ENCODE measurements at regions of chr11 and their contacts with region 1.

Region 1: GRCh38 chr11:64269380-64270234 is 14.9 kb downstream of the BAD start:
- DNase-seq: peak; percentile 95 to 98
- H3K4me3 ChIP-seq: peak overlapping the region; percentile 70 to 84 (median 82)
- H3K27ac ChIP-seq: peak overlapping the region; percentile 88
- H3K4me1 ChIP-seq: peaks cover 0 to 11% (median 5%) of the 10 kb centered on the region in 4 experiments; a peak in 5 of 7 replicates
- H3K27me3 ChIP-seq: no peaks in the 10 kb centered on the region
- CTCF ChIP-seq: no peak; a peak in 2 of 4 replicates
- EP300 ChIP-seq: 0 out of 3 replicates have a peak, but pooled peaks of 1 of the 2 experiments have one; percentile 27
- POLR2A ChIP-seq: no peak; a peak in 1 of 3 replicates
- RAD21 ChIP-seq: peak in 1 of 2 experiments; percentile 8; a peak in 1 of 4 replicates

Region 2: GRCh38 chr11:64007629-64008282 is 261.9 kb before region 1 on chr11:
- CTCF ChIA-PET with region 1: no interaction called
- POLR2A ChIA-PET with region 1: no interaction called
- DNase-seq: peak in 1 of 2 experiments; percentile 73
- H3K4me3 ChIP-seq: peak overlapping the region; percentile 21 to 57 (median 34); a peak in 7 of 8 replicates
- H3K27ac ChIP-seq: no peak overlapping the region
- H3K4me1 ChIP-seq: peaks cover 0 to 15% (median 10%) of the 10 kb centered on the region in 4 experiments; a peak in 5 of 7 replicates
- H3K27me3 ChIP-seq: peaks cover 28 to 89% (median 72%) of the 10 kb centered on the region in 4 experiments
- CTCF ChIP-seq: peak in 1 of 3 experiments; percentile 24; a peak in 1 of 4 replicates
- EP300 ChIP-seq: no peak
- POLR2A ChIP-seq: no peak
- RAD21 ChIP-seq: peak in 1 of 2 experiments; percentile 16; a peak in 1 of 4 replicates

Region 3: DNA sequence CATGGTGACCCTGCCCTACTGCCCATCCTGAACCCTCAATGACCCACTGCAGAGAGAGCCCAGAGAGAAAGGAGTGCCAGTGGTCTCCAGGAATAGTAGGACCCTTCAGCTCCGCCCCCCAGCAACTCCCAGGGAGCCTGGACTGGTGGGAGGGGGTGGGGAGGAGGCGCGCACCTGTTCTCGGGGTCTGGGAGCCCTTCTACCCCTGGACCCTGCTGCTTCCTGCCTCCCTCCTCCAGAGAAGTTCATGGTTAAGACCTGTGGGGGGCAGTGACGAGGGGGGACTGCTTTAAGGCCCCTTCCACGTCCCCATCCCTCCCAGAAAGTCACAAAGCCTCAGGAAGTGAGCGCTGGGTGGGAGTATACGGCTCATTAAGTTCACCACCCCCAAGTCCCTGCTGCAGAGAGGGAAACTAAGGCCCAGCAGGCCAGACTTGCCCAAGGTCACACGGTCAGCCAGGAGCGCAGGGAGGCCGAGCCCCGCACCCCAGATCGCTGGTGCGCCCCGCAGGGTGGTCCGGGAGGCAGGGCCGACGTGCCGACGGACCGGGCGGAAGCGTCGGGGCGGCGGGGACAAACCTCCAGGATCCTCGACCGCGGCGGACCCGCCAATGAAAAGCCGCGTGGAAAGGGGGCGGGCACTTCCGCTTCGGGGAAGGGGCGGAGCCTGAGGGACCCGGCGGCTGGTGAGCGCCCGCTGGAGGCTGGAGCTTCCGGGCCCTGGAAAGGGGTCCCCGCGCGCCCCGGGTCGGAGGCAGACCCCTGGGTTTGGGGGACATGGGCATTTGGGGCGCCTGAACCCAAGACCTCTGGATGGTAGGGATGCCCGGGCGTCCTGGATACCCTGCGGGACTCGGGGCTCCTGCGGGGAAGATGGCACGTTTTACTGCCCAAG is 43.7 kb before region 1 on chr11 and contains the starts of genes NUDT22 and TRPT1:
- CTCF ChIA-PET with region 1: interaction called, 5 read pairs
- POLR2A ChIA-PET with region 1: interaction called, 24 read pairs
- DNase-seq: peak in 1 of 2 experiments; percentile 97
- H3K4me3 ChIP-seq: peak within 1 kb of the TSS; percentile 63 to 90 (median 84)
- H3K27ac ChIP-seq: peak within 1 kb of the TSS; percentile 11; the same call in 1 of the 2 replicates
- H3K4me1 ChIP-seq: peaks cover 0 to 23% (median 14%) of the 10 kb centered on the region in 4 experiments; a peak in 6 of 7 replicates
- H3K27me3 ChIP-seq: no peaks in the 10 kb centered on the region
- CTCF ChIP-seq: peak in 1 of 3 experiments; percentile 48; a peak in 1 of 4 replicates
- EP300 ChIP-seq: no peak
- POLR2A ChIP-seq: peak in 1 of 2 experiments; percentile 44; a peak in 2 of 3 replicates
- RAD21 ChIP-seq: no peak; a peak in 2 of 4 replicates
- total RNA-seq, gene NUDT22: 43.4 and 51.5 TPM in 2 replicates
- total RNA-seq, gene TRPT1: 34.5 and 39.7 TPM in 2 replicates

Region 4: DNA sequence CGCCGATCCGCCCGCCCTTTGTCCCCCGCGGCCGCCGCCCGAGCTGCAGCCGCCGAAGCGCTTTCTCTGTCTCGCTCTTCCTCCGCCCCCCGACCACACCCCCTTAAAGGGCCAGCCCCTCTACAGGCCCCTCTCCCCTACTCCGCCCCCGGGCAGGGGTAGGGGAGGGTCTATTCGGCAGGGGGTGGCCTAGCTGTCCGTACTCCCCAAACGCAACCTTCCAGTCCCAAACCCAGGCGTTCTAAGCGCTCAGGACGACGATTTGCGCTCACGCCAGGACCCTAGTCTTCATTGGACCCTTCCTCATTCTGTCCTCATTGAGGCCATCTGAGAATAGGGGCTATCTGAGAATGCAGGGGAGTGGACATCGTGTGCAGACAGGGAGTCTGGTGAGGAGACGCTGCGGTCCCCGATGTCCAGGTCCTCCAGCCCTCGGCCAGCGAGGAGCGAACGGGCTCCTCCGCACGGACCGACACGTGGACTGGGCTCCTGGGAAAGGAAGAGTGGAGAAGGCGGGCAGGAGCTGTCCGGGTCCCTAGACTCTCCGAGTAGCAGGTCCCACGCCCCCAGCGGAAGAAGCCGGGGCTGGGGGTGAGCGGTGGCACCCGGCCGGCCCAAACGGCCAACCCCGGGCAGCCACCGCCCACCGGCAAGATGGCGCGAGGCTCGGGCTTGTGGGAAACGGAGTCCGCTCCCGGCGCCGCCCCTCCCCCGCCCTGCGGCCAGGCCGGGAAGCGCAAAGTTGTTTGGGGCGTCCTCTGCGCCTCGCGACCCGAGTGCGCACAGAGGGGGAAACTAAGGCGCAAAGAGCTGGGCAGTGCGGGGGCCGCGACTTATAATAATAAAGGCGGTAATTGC is 22.5 kb before region 1 on chr11 and contains the start of gene PPP1R14B:
- CTCF ChIA-PET with region 1: interaction called, 102 read pairs
- POLR2A ChIA-PET with region 1: interaction called, 352 read pairs
- DNase-seq: peak in 1 of 2 experiments; percentile 94
- H3K4me3 ChIP-seq: peak within 1 kb of the TSS; percentile 56 to 99 (median 90)
- H3K27ac ChIP-seq: peak within 1 kb of the TSS; percentile 61
- H3K4me1 ChIP-seq: peaks cover 0 to 48% (median 35%) of the 10 kb centered on the region in 4 experiments; a peak in 6 of 7 replicates
- H3K27me3 ChIP-seq: no peaks in the 10 kb centered on the region
- CTCF ChIP-seq: peak in 1 of 3 experiments; percentile 12; a peak in 1 of 4 replicates
- EP300 ChIP-seq: no peak
- POLR2A ChIP-seq: no peak
- RAD21 ChIP-seq: no peak
- total RNA-seq, gene PPP1R14B: 418 and 419 TPM in 2 replicates

Region 5: DNA sequence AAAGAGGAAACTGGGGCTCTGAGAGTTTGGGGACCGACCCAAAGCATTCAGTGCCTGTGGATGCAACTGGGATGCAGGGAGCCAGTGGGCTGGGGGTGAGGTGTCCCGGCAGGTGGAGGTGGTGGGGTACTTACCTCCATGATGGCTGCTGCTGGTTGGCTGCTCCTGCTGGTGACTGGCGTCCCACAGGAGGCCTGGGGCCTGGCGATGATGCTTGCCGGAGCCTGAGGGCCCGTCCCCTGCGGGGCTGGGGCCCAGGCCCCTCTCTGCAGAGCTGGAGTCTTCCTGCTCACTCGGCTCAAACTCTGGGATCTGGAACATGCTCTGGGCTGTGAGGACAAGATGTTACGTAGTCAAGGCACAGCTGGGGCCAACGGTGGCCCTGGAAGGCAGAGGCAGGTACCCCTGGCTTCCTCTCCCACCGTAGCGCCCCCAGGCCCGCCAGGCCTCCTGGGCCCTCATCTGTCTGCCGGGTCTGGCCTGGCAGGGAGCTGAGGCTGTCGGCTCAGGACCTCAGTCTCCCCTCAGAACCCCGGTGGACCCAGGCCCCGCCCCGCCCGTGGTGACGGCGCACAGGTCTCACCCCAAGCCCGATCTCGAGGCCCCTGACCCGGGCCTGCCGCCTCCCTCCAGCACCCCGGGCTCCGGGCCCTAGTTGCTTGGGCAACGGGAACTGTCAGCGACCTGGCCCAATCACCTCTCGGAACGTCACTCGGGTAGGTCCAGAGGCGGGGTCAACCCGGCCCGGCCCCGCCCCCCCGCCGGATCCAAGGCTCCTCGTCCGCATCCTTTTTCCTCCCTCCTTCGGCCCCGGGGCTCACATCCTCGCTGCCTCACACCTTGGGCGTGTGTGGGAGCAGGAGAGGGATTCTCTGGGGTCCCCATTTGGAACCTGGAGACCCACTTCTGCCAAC is 14.7 kb after region 1 on chr11 and contains the start of gene BAD:
- CTCF ChIA-PET with region 1: interaction called, 71 read pairs
- POLR2A ChIA-PET with region 1: interaction called, 79 read pairs
- DNase-seq: peak in 1 of 2 experiments; percentile 96
- H3K4me3 ChIP-seq: peak within 1 kb of the TSS; percentile 49 to 70 (median 69)
- H3K27ac ChIP-seq: peak within 1 kb of the TSS; percentile 68; the same call in 1 of the 2 replicates
- H3K4me1 ChIP-seq: peaks cover 0 to 8% (median 4%) of the 10 kb centered on the region in 4 experiments; a peak in 4 of 7 replicates
- H3K27me3 ChIP-seq: peaks cover 0 to 7% (median 3%) of the 10 kb centered on the region in 4 experiments; a peak in 3 of 7 replicates
- CTCF ChIP-seq: no peak
- EP300 ChIP-seq: no peak
- POLR2A ChIP-seq: peak in 1 of 2 experiments; percentile 25; a peak in 1 of 3 replicates
- RAD21 ChIP-seq: no peak
- total RNA-seq, gene BAD: 23.1 and 25.3 TPM in 2 replicates

Region 6: DNA sequence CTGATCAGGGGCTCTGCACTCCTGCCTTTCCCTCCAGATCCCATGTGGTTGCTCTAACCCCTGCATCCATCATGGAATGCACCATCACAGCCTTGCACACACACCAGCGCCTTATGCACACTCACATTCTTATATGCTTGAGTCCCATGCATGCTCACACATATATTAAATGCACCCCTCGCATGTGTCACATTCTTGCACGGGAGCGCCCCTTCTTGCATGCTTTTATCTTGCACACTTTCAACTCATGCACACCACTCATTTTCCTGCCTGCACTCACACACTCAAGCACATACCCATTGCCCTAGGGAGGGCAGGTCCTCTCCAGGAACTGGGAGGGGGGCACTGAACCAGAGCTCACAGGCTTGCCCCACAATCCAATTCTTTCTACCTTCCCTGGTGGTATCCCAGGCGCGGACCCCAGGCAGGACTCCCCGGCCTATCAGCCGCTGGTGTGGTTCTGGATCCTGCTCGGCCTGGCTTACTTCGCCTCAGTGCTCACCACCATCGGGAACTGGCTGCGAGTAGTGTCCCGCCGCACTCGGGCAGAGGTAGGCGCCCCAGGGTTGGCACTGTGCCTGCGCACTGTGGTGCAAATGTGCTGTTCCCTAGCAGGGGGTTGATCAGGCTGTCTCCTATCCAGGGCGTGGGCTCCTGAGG is 28.2 kb after region 1 on chr11:
- CTCF ChIA-PET with region 1: interaction called, 168 read pairs
- POLR2A ChIA-PET with region 1: interaction called, 57 read pairs
- DNase-seq: peak in 1 of 2 experiments; percentile 56
- H3K4me3 ChIP-seq: peak overlapping the region in 2 of 4 experiments; percentile 6 to 47; a peak in 2 of 8 replicates
- H3K27ac ChIP-seq: no peak overlapping the region
- H3K4me1 ChIP-seq: peaks cover 0 to 23% (median 14%) of the 10 kb centered on the region in 4 experiments; a peak in 5 of 7 replicates
- H3K27me3 ChIP-seq: peaks cover 70 to 91% (median 83%) of the 10 kb centered on the region in 4 experiments
- CTCF ChIP-seq: no peak
- EP300 ChIP-seq: no peak
- POLR2A ChIP-seq: no peak
- RAD21 ChIP-seq: no peak

Region 7: DNA sequence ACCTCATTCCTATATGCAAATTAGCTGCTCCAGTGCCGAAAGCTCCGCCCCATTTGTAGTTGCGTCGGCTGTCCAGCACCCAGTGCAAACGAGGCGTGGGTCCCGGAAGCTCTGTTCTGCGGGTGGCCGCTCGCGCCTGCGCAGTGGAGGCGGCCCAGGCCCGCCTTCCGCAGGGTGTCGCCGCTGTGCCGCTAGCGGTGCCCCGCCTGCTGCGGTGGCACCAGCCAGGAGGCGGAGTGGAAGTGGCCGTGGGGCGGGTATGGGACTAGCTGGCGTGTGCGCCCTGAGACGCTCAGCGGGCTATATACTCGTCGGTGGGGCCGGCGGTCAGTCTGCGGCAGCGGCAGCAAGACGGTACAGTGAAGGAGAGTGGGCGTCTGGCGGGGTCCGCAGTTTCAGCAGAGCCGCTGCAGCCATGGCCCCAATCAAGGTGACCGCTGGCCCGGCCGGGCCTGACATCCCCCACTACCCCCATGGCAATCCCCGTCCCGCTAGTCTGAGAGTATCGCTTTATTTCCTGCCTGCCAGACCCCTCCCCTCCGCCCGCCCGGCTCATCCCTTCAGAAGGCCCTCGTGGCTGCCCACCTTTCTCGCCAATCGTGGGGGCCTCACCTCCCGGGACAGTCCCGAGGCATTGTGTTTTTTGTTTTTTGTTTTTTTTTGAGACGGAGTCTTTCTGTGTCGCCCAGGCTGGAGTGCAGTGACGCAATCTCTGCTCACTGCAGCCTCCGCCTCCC is 48.5 kb after region 1 on chr11 and contains the start of gene PRDX5:
- CTCF ChIA-PET with region 1: interaction called, 4 read pairs
- POLR2A ChIA-PET with region 1: interaction called, 33 read pairs
- DNase-seq: peak in 1 of 2 experiments; percentile 90
- H3K4me3 ChIP-seq: peak within 1 kb of the TSS; percentile 73 to 80 (median 77)
- H3K27ac ChIP-seq: peak within 1 kb of the TSS; percentile 91
- H3K4me1 ChIP-seq: peaks cover 1 to 12% (median 3%) of the 10 kb centered on the region in 4 experiments; a peak in 6 of 7 replicates
- H3K27me3 ChIP-seq: no peaks in the 10 kb centered on the region
- CTCF ChIP-seq: peak in 1 of 3 experiments; percentile 51; a peak in 2 of 4 replicates
- EP300 ChIP-seq: no peak
- POLR2A ChIP-seq: no peak
- RAD21 ChIP-seq: peak; percentile 39 to 62
- total RNA-seq, gene PRDX5: 201 and 225 TPM in 2 replicates

Measured in H1 (cell line).